ENCODE measurements at regions of chr5 and their contacts with region 1.

Region 1: GRCh38 chr5:35777358-35778087 is 79.2 kb upstream of the IL7R start:
- DNase-seq: peak; percentile 62 to 78 (median 67)
- H3K4me3 ChIP-seq: no peak overlapping the region
- H3K4me3 Mint-ChIP-seq: peak overlapping the region in 6 of 7 donors; percentile 71 to 86 (median 78)
- H3K27ac ChIP-seq: no peak overlapping the region
- H3K27ac Mint-ChIP-seq: peak overlapping the region; percentile 65 to 99 (median 96)
- H3K4me1 ChIP-seq: peaks cover 44% of the 10 kb centered on the region
- H3K4me1 Mint-ChIP-seq: peaks cover 58 to 84% (median 82%) of the 10 kb centered on the region in 3 donors
- H3K27me3 ChIP-seq: no peaks in the 10 kb centered on the region
- H3K27me3 Mint-ChIP-seq: no peaks in the 10 kb centered on the region

Region 2: DNA sequence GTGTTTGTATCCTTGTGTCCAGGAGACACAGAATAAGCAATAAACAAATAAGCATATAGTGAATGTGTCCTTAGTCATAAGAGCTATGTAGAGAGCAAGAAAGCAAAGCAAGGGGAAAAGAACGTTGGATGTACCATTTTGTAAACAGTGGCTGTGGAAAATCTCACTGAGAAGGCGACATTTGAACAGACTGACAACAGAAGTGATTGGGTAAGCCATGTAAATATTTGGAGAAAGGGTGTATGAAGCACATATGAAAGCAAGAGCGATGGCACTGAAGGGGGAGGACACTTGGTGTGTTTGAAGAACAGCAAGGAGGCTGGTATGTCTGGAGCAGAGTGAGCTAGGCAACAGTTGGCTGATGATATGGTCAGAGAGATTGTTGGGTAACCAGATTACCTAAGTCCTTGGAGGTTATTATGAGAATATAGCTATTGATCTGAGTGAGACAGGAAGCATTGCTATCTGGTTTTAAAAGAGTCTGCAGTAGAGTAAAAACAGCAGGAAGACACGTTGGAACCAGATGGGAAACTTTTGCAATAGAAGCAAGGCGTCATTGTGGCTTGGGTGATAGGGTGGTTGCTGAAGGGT is 36.3 kb before region 1 on chr5:
- CTCF ChIA-PET with region 1: no interaction called
- POLR2A ChIA-PET with region 1: no interaction called
- DNase-seq: no peak
- H3K4me3 ChIP-seq: no peak overlapping the region
- H3K4me3 Mint-ChIP-seq: no peak overlapping the region
- H3K27ac ChIP-seq: no peak overlapping the region
- H3K27ac Mint-ChIP-seq: no peak overlapping the region
- H3K4me1 ChIP-seq: no peaks in the 10 kb centered on the region
- H3K4me1 Mint-ChIP-seq: peaks cover 4 to 21% (median 6%) of the 10 kb centered on the region in 3 donors
- H3K27me3 ChIP-seq: no peaks in the 10 kb centered on the region
- H3K27me3 Mint-ChIP-seq: peaks cover 0 to 7% of the 10 kb centered on the region in 2 donors

Region 3: GRCh38 chr5:35758151-35758724 is 19.3 kb before region 1 on chr5:
- CTCF ChIA-PET with region 1: no interaction called
- POLR2A ChIA-PET with region 1: no interaction called
- DNase-seq: no peak
- H3K4me3 ChIP-seq: no peak overlapping the region
- H3K4me3 Mint-ChIP-seq: no peak overlapping the region
- H3K27ac ChIP-seq: no peak overlapping the region
- H3K27ac Mint-ChIP-seq: peak overlapping the region in 3 of 8 donors; percentile 19 to 42 (median 36)
- H3K4me1 ChIP-seq: peaks cover 8% of the 10 kb centered on the region
- H3K4me1 Mint-ChIP-seq: peaks cover 6 to 30% (median 12%) of the 10 kb centered on the region in 3 donors
- H3K27me3 ChIP-seq: no peaks in the 10 kb centered on the region
- H3K27me3 Mint-ChIP-seq: peaks cover 0 to 3% of the 10 kb centered on the region in 2 donors

Region 4: GRCh38 chr5:35789732-35790456 is 12.4 kb after region 1 on chr5:
- CTCF ChIA-PET with region 1: interaction called, 12 read pairs
- POLR2A ChIA-PET with region 1: interaction called, 3 read pairs
- DNase-seq: peak in 1 of 5 donors; percentile 26
- H3K4me3 ChIP-seq: no peak overlapping the region
- H3K4me3 Mint-ChIP-seq: peak overlapping the region in 6 of 7 donors; percentile 34 to 75 (median 48)
- H3K27ac ChIP-seq: peak overlapping the region; percentile 27
- H3K27ac Mint-ChIP-seq: peak overlapping the region; percentile 42 to 90 (median 78)
- H3K4me1 ChIP-seq: peaks cover 74% of the 10 kb centered on the region
- H3K4me1 Mint-ChIP-seq: peaks cover 75 to 93% (median 89%) of the 10 kb centered on the region in 3 donors
- H3K27me3 ChIP-seq: no peaks in the 10 kb centered on the region
- H3K27me3 Mint-ChIP-seq: peaks cover 0 to 2% of the 10 kb centered on the region in 2 donors

Region 5: DNA sequence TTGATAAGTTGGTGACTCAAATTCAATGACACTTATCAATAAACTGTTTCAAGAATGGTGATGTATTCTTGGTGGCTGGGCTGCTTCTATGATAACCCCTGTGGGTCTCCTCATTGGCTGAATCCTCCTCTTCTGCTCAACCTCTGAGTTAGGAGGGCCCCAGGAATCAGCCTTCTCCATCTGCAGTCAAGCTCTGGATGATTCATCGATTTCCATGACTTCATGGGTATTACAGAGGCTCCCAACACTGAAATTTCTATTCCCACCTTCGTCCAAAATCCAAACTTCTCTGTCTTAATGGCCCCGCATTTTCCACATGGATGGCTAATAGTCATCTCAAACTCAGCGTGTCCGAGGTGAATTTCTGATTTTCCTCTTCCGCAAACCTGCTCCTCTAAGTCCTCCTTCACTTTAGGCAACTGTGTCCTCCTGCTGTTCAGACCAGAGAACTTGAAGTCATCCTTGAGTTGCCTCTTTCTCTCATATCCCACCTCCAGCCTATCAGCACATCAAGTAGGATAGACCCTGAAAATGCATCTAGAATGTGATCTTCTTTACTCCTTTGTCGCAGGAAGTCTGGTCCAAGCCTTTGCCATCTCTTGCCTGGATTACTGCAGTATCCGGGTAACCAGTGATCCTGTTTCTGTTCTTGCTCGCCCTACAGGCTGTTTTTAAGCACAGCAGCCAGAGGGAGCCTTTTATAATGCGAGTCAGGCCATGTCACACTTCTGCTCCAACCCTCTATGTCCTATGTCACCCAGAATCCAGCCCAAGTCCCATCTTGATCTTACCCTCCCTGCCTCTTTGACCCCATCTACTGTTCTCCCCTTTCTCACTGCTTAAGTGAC is 37.8 kb after region 1 on chr5:
- CTCF ChIA-PET with region 1: interaction called, 18 read pairs
- POLR2A ChIA-PET with region 1: interaction called, 3 read pairs
- DNase-seq: no peak
- H3K4me3 ChIP-seq: peak overlapping the region; percentile 28
- H3K4me3 Mint-ChIP-seq: no peak overlapping the region
- H3K27ac ChIP-seq: peak overlapping the region; percentile 10
- H3K27ac Mint-ChIP-seq: no peak overlapping the region
- H3K4me1 ChIP-seq: peaks cover 91% of the 10 kb centered on the region
- H3K4me1 Mint-ChIP-seq: peaks cover 19 to 49% (median 45%) of the 10 kb centered on the region in 3 donors
- H3K27me3 ChIP-seq: no peaks in the 10 kb centered on the region
- H3K27me3 Mint-ChIP-seq: no peaks in the 10 kb centered on the region

Region 6: GRCh38 chr5:35822511-35822910 is 45.0 kb after region 1 on chr5:
- CTCF ChIA-PET with region 1: interaction called, 19 read pairs
- POLR2A ChIA-PET with region 1: interaction called, 4 read pairs
- DNase-seq: peak in 4 of 5 donors; percentile 8 to 80 (median 65)
- H3K4me3 ChIP-seq: peak overlapping the region; percentile 11
- H3K4me3 Mint-ChIP-seq: peak overlapping the region; percentile 59 to 83 (median 74)
- H3K27ac ChIP-seq: no peak overlapping the region
- H3K27ac Mint-ChIP-seq: peak overlapping the region; percentile 83 to 99 (median 93)
- H3K4me1 ChIP-seq: peaks cover 97% of the 10 kb centered on the region
- H3K4me1 Mint-ChIP-seq: peaks cover 0 to 91% (median 89%) of the 10 kb centered on the region in 3 donors
- H3K27me3 ChIP-seq: no peaks in the 10 kb centered on the region
- H3K27me3 Mint-ChIP-seq: no peaks in the 10 kb centered on the region

Region 7: GRCh38 chr5:35857606-35858205 is 80.2 kb after region 1 on chr5:
- CTCF ChIA-PET with region 1: interaction called, 77 read pairs
- POLR2A ChIA-PET with region 1: interaction called, 18 read pairs
- DNase-seq: peak in 1 of 5 donors; percentile 31
- H3K4me3 ChIP-seq: peak overlapping the region; percentile 93
- H3K4me3 Mint-ChIP-seq: peak overlapping the region; percentile 90 to 97 (median 93)
- H3K27ac ChIP-seq: peak overlapping the region; percentile 95
- H3K27ac Mint-ChIP-seq: peak overlapping the region; percentile 68 to 100 (median 98)
- H3K4me1 ChIP-seq: peaks cover 55% of the 10 kb centered on the region
- H3K4me1 Mint-ChIP-seq: peaks cover 56 to 71% (median 59%) of the 10 kb centered on the region in 3 donors
- H3K27me3 ChIP-seq: no peaks in the 10 kb centered on the region
- H3K27me3 Mint-ChIP-seq: peaks cover 0 to 1% of the 10 kb centered on the region in 2 donors

Region 8: GRCh38 chr5:35863159-35863558 is 85.6 kb after region 1 on chr5:
- CTCF ChIA-PET with region 1: interaction called, 77 read pairs
- POLR2A ChIA-PET with region 1: interaction called, 18 read pairs
- DNase-seq: no peak
- H3K4me3 ChIP-seq: peak overlapping the region; percentile 93
- H3K4me3 Mint-ChIP-seq: peak overlapping the region; percentile 93 to 99 (median 97)
- H3K27ac ChIP-seq: no peak overlapping the region
- H3K27ac Mint-ChIP-seq: peak overlapping the region; percentile 40 to 99 (median 96)
- H3K4me1 ChIP-seq: peaks cover 49% of the 10 kb centered on the region
- H3K4me1 Mint-ChIP-seq: peaks cover 66 to 84% (median 73%) of the 10 kb centered on the region in 3 donors
- H3K27me3 ChIP-seq: no peaks in the 10 kb centered on the region
- H3K27me3 Mint-ChIP-seq: no peaks in the 10 kb centered on the region

Region 9: GRCh38 chr5:35876921-35877320 is 99.4 kb after region 1 on chr5:
- CTCF ChIA-PET with region 1: interaction called, 9 read pairs
- POLR2A ChIA-PET with region 1: interaction called, 22 read pairs
- DNase-seq: no peak
- H3K4me3 ChIP-seq: no peak overlapping the region
- H3K4me3 Mint-ChIP-seq: peak overlapping the region in 4 of 7 donors; percentile 9 to 57 (median 19)
- H3K27ac ChIP-seq: no peak overlapping the region
- H3K27ac Mint-ChIP-seq: peak overlapping the region; percentile 61 to 91 (median 79)
- H3K4me1 ChIP-seq: peaks cover 62% of the 10 kb centered on the region
- H3K4me1 Mint-ChIP-seq: peaks cover 76 to 96% (median 93%) of the 10 kb centered on the region in 3 donors
- H3K27me3 ChIP-seq: no peaks in the 10 kb centered on the region
- H3K27me3 Mint-ChIP-seq: no peaks in the 10 kb centered on the region

Region 10: DNA sequence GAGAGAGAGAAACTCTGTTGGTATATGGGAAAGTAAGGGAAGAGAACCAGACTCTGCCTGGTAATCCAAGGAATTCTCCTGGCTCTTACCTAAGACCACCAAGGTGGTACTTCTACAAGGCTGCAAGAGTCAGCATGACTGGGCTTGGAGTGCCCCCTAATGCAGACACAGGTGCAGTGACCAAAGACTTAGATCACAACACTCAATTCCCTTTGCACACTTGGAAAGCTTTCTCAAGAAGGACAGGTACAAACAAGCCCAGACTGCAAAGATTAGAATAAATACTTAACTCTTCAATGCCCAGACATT is 264.0 kb after region 1 on chr5:
- CTCF ChIA-PET with region 1: no interaction called
- POLR2A ChIA-PET with region 1: no interaction called
- DNase-seq: no peak
- H3K4me3 ChIP-seq: no peak overlapping the region
- H3K4me3 Mint-ChIP-seq: no peak overlapping the region
- H3K27ac ChIP-seq: no peak overlapping the region
- H3K27ac Mint-ChIP-seq: no peak overlapping the region
- H3K4me1 ChIP-seq: no peaks in the 10 kb centered on the region
- H3K4me1 Mint-ChIP-seq: no peaks in the 10 kb centered on the region
- H3K27me3 ChIP-seq: no peaks in the 10 kb centered on the region
- H3K27me3 Mint-ChIP-seq: peaks cover 10 to 25% of the 10 kb centered on the region in 2 donors